Heart left ventricle (tissue), 16 donors: ENCODE measurements at regions of chr15 and their contacts with region 1.

Region 1: DNA sequence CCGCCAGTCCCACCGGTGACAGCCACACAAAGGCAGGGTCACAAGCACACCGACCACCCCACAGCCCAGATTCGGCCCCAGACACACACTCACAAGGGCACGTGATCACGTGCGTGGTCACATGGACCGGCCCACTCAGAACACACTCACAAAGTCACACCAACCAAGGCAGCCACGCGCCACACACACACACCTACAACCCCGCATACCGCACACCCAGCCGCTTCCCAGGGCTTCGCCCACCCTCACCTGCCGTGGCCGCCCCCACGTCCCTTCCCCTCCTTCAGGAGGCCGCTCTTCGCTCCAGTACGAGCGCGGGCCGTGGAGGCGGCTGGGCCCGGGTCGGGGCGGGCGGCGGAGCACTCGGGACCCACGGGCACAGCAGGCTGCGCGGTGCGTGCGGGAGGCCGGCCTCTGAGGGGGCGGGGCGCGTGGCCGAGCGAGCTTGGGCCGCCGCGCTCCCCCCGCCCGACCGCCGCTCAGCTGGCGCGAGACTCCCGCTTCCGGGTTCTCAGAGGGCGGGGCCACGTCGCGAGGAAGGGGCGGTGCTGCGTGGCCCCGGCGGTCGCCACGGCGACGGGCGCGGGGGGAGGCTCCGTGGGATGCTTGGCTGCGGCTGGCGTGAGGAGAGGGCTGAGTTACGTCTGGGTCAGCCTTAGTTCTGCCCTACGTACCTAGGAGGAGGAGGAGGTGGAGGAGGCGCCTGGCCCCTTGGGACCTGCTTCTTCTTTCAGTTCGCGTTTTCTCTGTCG is at the start of gene SPG21:
- DNase-seq: peak; percentile 94 to 97 (median 95)
- ATAC-seq: peak; percentile 87 to 98 (median 96)
- H3K4me3 ChIP-seq: peak within 1 kb of the TSS; percentile 84 to 99 (median 92)
- H3K27ac ChIP-seq: peak within 1 kb of the TSS; percentile 77 to 96 (median 92)
- H3K4me1 ChIP-seq: peaks cover 0 to 50% (median 19%) of the 10 kb centered on the region in 12 donors
- H3K27me3 ChIP-seq: no peaks in the 10 kb centered on the region
- CTCF ChIP-seq: no peak
- POLR2A ChIP-seq: peak in 1 of 2 donors; percentile 75
- total RNA-seq, gene SPG21: 38.2 to 63.6 (median 48.7) TPM

Region 2: DNA sequence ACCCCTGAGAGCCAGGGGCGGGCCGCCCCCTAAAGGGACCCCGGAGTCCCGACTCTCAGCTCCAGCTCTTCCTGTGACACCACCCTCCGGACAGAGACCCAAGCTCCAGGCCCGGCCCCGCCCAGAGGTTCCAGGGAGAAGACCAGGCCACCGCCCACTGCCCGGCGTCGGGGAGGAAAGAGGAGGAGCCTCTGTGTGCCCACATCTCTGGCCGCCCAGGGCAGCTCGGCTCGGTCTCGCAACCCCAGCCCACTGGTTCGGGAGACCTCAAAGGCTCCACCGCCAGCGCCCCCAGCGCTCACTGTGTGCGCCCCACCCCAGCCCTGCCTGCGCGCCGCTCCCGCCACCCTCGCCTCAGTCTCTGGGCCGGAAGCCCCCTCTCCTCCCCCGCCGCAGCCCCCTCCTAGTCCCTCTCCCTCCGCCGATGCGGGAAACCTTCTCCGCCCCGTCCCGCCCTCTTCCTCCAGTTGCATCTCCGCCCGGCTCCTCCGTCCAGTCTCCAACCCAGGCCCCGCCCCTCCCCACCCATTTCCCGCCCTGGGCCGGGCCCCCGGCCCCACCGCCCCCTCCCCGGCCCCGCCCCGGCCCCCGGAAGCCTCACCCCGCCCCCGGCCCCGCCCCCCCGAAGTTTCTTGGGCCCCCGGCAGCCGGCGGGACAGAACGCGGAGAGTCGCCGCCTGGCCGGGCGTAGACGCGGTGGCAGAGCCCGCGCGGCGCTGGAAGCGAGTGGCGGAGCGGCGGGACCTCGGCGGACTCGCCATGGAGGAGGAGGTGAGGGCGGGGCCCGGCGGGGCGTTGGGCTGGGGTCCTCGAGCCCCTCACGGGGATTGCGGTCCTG is 148.1 kb before region 1 on chr15 and contains the start of gene PLEKHO2:
- intact Hi-C with region 1: loop called in 1 of 10 experiments (anchors 5 kb)
- DNase-seq: peak; percentile 97 to 98 (median 98)
- ATAC-seq: peak; percentile 82 to 92 (median 88)
- H3K4me3 ChIP-seq: peak within 1 kb of the TSS; percentile 86 to 100 (median 97)
- H3K27ac ChIP-seq: peak within 1 kb of the TSS; percentile 89 to 98 (median 96)
- H3K4me1 ChIP-seq: peaks cover 6 to 64% (median 36%) of the 10 kb centered on the region in 12 donors
- H3K27me3 ChIP-seq: no peaks in the 10 kb centered on the region
- CTCF ChIP-seq: peak in 4 of 12 donors; percentile 19 to 39 (median 32)
- POLR2A ChIP-seq: peak in 1 of 2 donors; percentile 89
- total RNA-seq, gene PLEKHO2: 7.0 to 50.8 (median 9.2) TPM

Region 3: GRCh38 chr15:64950888-64951287 is 38.7 kb before region 1 on chr15:
- intact Hi-C with region 1: no loop called
- DNase-seq: no peak
- ATAC-seq: no peak
- H3K4me3 ChIP-seq: no peak overlapping the region
- H3K27ac ChIP-seq: no peak overlapping the region
- H3K4me1 ChIP-seq: no peaks in the 10 kb centered on the region
- H3K27me3 ChIP-seq: no peaks in the 10 kb centered on the region
- CTCF ChIP-seq: no peak
- POLR2A ChIP-seq: no peak

Region 4: GRCh38 chr15:64975390-64975789 is 14.2 kb before region 1 on chr15:
- intact Hi-C with region 1: no loop called
- DNase-seq: no peak
- ATAC-seq: no peak
- H3K4me3 ChIP-seq: no peak overlapping the region
- H3K27ac ChIP-seq: no peak overlapping the region
- H3K4me1 ChIP-seq: no peaks in the 10 kb centered on the region
- H3K27me3 ChIP-seq: no peaks in the 10 kb centered on the region
- CTCF ChIP-seq: no peak
- POLR2A ChIP-seq: no peak

Region 5: DNA sequence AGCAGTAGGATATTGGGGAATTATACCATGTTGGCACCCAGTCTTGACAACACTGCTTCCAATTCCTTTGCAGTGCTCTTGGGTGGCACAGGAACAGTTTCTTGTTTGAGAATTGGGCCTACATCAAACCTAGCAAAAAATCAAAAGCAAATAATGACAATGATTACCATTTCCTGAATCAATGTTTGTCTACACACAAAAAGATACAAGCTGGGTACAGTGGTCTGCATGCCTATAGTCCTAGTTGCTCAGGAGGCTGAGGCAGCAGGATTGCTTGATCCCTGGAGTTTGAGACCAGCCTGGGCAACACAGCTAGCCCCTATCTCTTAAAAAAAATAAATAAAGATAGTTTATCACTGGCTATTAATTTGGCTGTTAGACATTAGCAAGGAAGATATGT is 31.9 kb after region 1 on chr15:
- intact Hi-C with region 1: no loop called
- DNase-seq: no peak
- ATAC-seq: no peak
- H3K4me3 ChIP-seq: no peak overlapping the region
- H3K27ac ChIP-seq: no peak overlapping the region
- H3K4me1 ChIP-seq: no peaks in the 10 kb centered on the region
- H3K27me3 ChIP-seq: no peaks in the 10 kb centered on the region
- CTCF ChIP-seq: no peak
- POLR2A ChIP-seq: no peak